ENCODE measurements at regions of chr12 and their contacts with region 1.

Region 1: GRCh38 chr12:57088459-57089248 is at the start of gene NAB2:
- H3K4me3 Mint-ChIP-seq: peak within 1 kb of the TSS; percentile 98
- H3K27ac Mint-ChIP-seq: peak within 1 kb of the TSS; percentile 99
- H3K4me1 Mint-ChIP-seq: peaks cover 72% of the 10 kb centered on the region
- H3K27me3 Mint-ChIP-seq: no peaks in the 10 kb centered on the region

Region 2: GRCh38 chr12:57111031-57111734 is 22.5 kb after region 1 on chr12 and contains the start of gene STAT6:
- intact Hi-C with region 1: loop called (anchors 1 kb)
- H3K4me3 Mint-ChIP-seq: peak within 1 kb of the TSS; percentile 98
- H3K27ac Mint-ChIP-seq: peak within 1 kb of the TSS; percentile 95
- H3K4me1 Mint-ChIP-seq: peaks cover 65% of the 10 kb centered on the region
- H3K27me3 Mint-ChIP-seq: peaks cover 1% of the 10 kb centered on the region

Measured in dendritic cell treated with granulocyte-macrophage colony-stimulating factor and Interleukin-4, amounts not matched to agents 40 ng/mL and 50 ng/mL, for 4 days (primary cell).